ENCODE measurements at regions of chr5 and their contacts with region 1.

Region 1: DNA sequence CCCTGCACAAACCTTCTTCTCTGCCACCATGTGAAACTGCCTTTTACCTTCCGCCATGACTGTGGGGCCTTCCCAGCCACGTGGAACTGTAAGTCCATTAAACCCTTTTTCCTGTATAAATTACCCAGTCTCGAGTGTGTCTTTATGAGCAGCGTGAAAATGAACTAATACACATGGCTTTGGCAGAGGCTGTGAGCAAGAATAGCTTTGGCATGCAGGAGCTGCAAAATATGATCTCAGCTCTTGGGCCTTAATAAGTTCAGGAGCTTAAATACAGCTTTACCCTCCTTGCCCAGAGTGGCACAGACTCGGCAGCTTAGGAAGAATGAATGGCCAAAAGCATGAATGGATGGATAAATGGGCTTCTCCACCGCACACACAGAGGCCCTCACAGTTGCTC is 15.7 kb upstream of the SLC36A1 start:
- DNase-seq: no peak
- H3K4me3 ChIP-seq: no peak overlapping the region
- H3K27ac ChIP-seq: peak overlapping the region in 20 of 59 donors; percentile 4 to 74 (median 38)
- H3K27me3 ChIP-seq: no peaks in the 10 kb centered on the region
- CTCF ChIP-seq: no peak

Region 2: GRCh38 chr5:151406322-151406947 is 25.2 kb before region 1 on chr5:
- intact Hi-C with region 1: no loop called
- DNase-seq: no peak
- H3K4me3 ChIP-seq: peak overlapping the region in 1 of 59 donors; percentile 27
- H3K27ac ChIP-seq: no peak overlapping the region
- H3K27me3 ChIP-seq: peaks cover 0 to 5% (median 0%) of the 10 kb centered on the region in 45 donors
- CTCF ChIP-seq: peak in 39 of 56 donors; percentile 8 to 46 (median 29)

Region 3: DNA sequence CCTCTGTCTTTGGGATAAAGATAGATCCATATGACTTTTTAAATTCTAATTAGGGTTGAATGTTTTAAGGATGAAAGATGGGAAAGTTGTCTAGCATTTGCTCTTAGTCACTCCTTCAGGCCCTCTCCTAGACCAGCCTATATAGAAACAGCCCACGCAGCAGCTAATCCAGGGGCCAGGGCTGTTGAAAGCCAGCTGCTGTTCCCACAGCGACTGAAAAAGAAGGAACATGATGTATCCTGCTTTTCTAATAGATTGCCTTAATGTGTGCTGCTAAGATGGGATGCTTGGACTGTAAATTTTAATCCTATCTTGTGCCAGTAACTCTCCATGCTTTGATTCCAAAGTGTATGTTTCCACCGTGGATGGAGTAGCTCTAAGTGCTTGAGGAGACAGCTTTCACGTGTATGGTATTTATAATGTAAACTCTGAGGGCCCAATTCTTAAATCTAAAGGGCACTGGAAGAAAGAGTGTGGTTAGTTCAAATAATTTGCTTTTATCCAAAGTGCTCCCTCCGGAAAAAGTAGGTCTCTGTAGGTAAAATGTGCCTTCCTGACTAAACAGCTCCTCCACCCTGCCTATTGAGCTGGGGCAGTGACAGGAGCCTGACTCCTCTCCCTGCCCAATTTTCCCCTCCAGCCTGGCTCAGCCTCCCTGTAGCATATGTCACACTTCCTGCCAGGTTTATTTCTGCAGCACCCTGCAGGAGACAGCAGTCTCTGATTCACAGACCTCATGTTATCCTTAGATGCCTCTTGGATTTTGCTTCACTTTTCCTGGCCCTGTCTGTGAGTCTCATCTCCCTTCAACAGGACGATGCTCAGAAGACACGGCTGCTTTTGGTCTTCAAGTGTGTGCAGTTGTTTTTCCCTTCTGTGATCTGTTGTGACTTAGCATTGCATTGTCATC is 49.0 kb after region 1 on chr5:
- intact Hi-C with region 1: loop called in 1 of 2 experiments (anchors 2 kb)
- DNase-seq: peak in 7 of 10 donors; percentile 25 to 88 (median 61)
- H3K4me3 ChIP-seq: no peak overlapping the region
- H3K27ac ChIP-seq: peak overlapping the region in 50 of 59 donors; percentile 5 to 86 (median 58)
- H3K27me3 ChIP-seq: no peaks in the 10 kb centered on the region
- CTCF ChIP-seq: no peak

Measured in dorsolateral prefrontal cortex (tissue), 120 donors.